Mucosa of descending colon (tissue), 3 donors: ENCODE measurements at regions of chr6 and their contacts with region 1.

Region 1: DNA sequence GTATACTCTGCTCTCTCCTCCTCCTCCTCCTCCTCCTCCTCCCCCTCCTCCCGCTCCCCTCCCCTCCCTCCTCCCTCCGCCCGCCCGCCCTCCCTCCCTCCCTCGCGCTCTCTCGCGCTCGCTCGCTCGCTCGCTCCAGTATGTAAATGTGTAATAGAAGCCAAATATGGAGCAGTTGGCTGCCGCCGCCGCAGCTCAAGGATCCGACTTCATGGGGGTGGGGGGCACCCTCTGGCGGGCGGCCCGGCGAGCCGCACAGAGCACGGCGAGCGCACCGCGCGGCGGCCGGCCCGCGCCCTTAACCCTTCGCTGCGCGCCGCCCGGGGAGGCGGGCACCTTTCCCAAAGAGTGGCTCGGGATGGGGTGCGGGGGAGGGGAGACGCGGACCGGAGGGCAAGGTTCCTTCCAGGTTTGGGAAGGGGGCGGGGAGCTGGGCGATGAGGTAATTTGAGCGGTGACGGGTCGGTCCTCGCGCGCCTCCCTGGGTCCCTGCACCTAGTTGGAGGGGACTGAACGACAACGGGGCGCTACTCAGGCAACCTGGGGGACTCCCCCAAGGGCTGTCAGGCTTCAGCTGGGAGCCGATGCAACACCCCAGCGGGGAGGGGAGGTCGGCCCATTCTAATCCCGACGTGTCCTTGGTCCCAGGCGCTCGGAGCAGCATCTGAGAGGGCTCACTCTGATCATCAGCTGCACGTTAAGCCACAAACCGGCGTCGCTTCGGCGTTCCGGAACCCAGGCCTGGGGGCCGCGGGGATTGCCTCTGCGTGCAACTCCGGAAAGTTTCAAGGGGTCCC is 409 bp upstream of the ATXN1 start:
- DNase-seq: peak; percentile 91 to 93 (median 92)
- ATAC-seq: peak; percentile 67
- H3K4me3 ChIP-seq: peak overlapping the region; percentile 37
- H3K4me1 ChIP-seq: peaks cover 18% of the 10 kb centered on the region
- CTCF ChIP-seq: no peak

Region 2: DNA sequence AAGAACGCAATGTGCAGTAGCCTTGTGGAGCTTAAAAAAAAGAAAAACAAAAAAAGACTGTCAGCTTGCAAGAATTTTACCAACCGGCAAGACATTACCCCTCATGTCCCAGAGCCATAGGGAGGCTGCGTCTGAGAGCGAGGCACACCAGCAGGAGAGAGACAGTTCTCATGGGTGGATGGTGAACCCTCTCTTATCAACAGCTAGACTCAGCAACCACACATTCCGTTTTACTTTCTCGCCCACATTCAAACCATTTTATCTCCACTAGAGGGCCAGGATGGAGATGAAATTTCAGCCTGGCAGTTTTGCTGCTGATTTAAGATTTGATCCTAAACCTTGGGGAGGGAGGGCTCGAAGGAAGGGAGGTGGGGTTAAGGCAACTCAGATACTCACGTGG is 247.4 kb before region 1 on chr6:
- intact Hi-C with region 1: loop called (anchors 5 to 10 kb)
- DNase-seq: no peak
- ATAC-seq: peak; percentile 44
- H3K4me3 ChIP-seq: no peak overlapping the region
- H3K4me1 ChIP-seq: peaks cover 16% of the 10 kb centered on the region
- CTCF ChIP-seq: no peak

Region 3: GRCh38 chr6:16519265-16520242 is 242.1 kb before region 1 on chr6:
- intact Hi-C with region 1: loop called (anchors 5 to 10 kb)
- DNase-seq: no peak
- ATAC-seq: peak; percentile 83
- H3K4me3 ChIP-seq: no peak overlapping the region
- H3K4me1 ChIP-seq: peaks cover 2% of the 10 kb centered on the region
- CTCF ChIP-seq: no peak

Region 4: GRCh38 chr6:16700202-16700915 is 61.3 kb before region 1 on chr6:
- intact Hi-C with region 1: no loop called
- DNase-seq: no peak
- ATAC-seq: peak; percentile 48
- H3K4me3 ChIP-seq: no peak overlapping the region
- H3K4me1 ChIP-seq: peaks cover 4% of the 10 kb centered on the region
- CTCF ChIP-seq: no peak